HCT116 (cell line): ENCODE measurements at regions of chr5 and their contacts with region 1.

Region 1: DNA sequence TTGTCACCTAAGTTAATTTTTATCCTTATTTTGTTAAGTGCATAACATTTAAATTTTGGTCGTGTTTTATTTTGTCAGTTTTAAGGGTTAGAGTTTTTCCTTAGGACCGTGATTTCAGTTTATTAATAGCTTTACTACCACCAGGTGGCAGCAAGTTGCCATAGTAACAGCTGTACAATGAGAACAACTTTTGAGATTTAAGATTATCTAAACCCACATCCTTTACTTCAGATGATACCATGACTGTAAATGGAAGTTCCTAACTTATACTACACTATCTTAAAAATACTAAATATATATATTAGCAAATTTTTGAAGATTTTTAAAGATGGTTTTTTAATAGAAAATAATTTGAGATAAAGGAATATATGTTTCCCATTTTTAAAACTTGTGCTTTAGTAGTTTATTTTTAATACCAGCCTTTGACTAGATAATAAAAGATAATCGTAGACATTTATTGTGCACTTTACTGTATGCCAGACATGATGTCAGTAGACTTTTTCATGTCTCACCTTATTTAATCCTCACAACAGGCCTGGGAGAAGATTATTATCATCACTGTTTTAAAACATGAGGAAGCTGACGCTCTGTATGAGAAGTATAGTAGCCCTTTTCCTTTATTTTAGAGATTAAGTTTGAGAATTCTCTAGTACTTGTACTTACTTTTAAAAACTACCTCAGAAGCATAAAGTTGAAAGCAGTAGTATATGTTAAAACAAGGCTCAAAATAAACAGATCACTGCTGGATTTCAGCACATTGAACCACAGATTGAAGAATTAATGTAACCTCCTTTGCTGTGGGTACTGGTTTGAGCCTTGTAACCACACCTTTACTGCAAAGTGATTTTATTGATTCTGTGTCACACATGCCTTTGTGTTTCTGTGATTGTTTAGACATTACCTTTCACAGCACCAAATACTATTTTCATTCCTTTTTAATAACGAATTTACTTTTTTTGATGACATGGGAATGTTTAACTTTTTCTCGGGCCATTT is 27.5 kb downstream of the SREK1 start:
- DNase-seq: no peak
- ATAC-seq: peak; percentile 54; the same call in 1 of the 2 replicates
- H3K4me3 ChIP-seq: no peak overlapping the region
- H3K27ac ChIP-seq: no peak overlapping the region
- H3K4me1 ChIP-seq: no peaks in the 10 kb centered on the region
- H3K27me3 ChIP-seq: no peaks in the 10 kb centered on the region
- CTCF ChIP-seq: peak; percentile 35 to 63 (median 44); a peak in 5 of 6 replicates
- POLR2A ChIP-seq: no peak
- RAD21 ChIP-seq: peak; percentile 52

Region 2: GRCh38 chr5:65451436-65451835 is 720.2 kb before region 1 on chr5:
- CTCF ChIA-PET with region 1: no interaction called
- POLR2A ChIA-PET with region 1: no interaction called
- RAD21 ChIA-PET with region 1: no interaction called
- intact Hi-C with region 1: no loop called
- DNase-seq: no peak
- ATAC-seq: no peak
- H3K4me3 ChIP-seq: no peak overlapping the region
- H3K27ac ChIP-seq: no peak overlapping the region
- H3K4me1 ChIP-seq: no peaks in the 10 kb centered on the region
- H3K27me3 ChIP-seq: no peaks in the 10 kb centered on the region
- CTCF ChIP-seq: no peak
- POLR2A ChIP-seq: no peak
- RAD21 ChIP-seq: no peak

Region 3: DNA sequence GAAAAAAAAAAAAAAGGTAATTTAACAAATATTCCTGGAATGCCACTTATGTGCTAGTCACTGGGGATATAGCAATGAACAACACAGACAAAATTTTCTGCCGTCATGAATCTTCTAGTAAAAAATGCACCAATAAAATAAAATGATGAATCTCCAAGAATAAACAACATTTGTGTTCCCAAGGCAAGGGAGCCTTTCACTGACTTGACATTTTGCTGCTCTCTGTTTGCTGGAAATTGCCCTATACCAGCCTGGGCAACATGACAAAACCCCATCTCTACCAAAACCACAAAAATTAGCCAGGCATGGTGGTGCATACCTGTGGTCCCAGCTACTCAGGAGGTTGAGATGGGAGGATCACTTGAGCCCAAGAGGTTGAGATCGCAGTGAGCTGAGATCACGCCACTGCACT is 309.8 kb before region 1 on chr5:
- CTCF ChIA-PET with region 1: no interaction called
- POLR2A ChIA-PET with region 1: no interaction called
- RAD21 ChIA-PET with region 1: no interaction called
- intact Hi-C with region 1: no loop called
- DNase-seq: peak; percentile 61
- ATAC-seq: peak; percentile 97
- H3K4me3 ChIP-seq: peak overlapping the region in 1 of 2 experiments; percentile 33; a peak in 2 of 4 replicates
- H3K27ac ChIP-seq: peak overlapping the region; percentile 65; the same call in 1 of the 2 replicates
- H3K4me1 ChIP-seq: peaks cover 16 to 46% of the 10 kb centered on the region in 2 experiments
- H3K27me3 ChIP-seq: no peaks in the 10 kb centered on the region
- CTCF ChIP-seq: no peak
- POLR2A ChIP-seq: no peak
- RAD21 ChIP-seq: no peak

Region 4: GRCh38 chr5:65994117-65994786 is 177.4 kb before region 1 on chr5:
- CTCF ChIA-PET with region 1: no interaction called
- POLR2A ChIA-PET with region 1: no interaction called
- RAD21 ChIA-PET with region 1: no interaction called
- intact Hi-C with region 1: no loop called
- DNase-seq: no peak
- ATAC-seq: no peak
- H3K4me3 ChIP-seq: no peak overlapping the region
- H3K27ac ChIP-seq: no peak overlapping the region
- H3K4me1 ChIP-seq: no peaks in the 10 kb centered on the region
- H3K27me3 ChIP-seq: no peaks in the 10 kb centered on the region
- CTCF ChIP-seq: no peak
- POLR2A ChIP-seq: no peak
- RAD21 ChIP-seq: no peak

Region 5: GRCh38 chr5:66209350-66209749 is 37.7 kb after region 1 on chr5:
- CTCF ChIA-PET with region 1: interaction called, 3 read pairs
- POLR2A ChIA-PET with region 1: no interaction called
- RAD21 ChIA-PET with region 1: no interaction called
- intact Hi-C with region 1: loop called (anchors 1 kb)
- DNase-seq: peak; percentile 75
- ATAC-seq: peak; percentile 97
- H3K4me3 ChIP-seq: no peak overlapping the region; a peak in 1 of 4 replicates
- H3K27ac ChIP-seq: peak overlapping the region; percentile 52
- H3K4me1 ChIP-seq: peaks cover 17 to 25% of the 10 kb centered on the region in 2 experiments
- H3K27me3 ChIP-seq: no peaks in the 10 kb centered on the region
- CTCF ChIP-seq: peak; percentile 54 to 60 (median 58); a peak in 5 of 6 replicates
- POLR2A ChIP-seq: no peak
- RAD21 ChIP-seq: peak; percentile 87

Region 6: GRCh38 chr5:66223636-66224035 is 52.0 kb after region 1 on chr5:
- CTCF ChIA-PET with region 1: interaction called, 4 read pairs
- POLR2A ChIA-PET with region 1: no interaction called
- RAD21 ChIA-PET with region 1: no interaction called
- intact Hi-C with region 1: loop called (anchors 5 kb)
- DNase-seq: peak; percentile 21
- ATAC-seq: peak; percentile 82
- H3K4me3 ChIP-seq: no peak overlapping the region
- H3K27ac ChIP-seq: no peak overlapping the region
- H3K4me1 ChIP-seq: no peaks in the 10 kb centered on the region
- H3K27me3 ChIP-seq: no peaks in the 10 kb centered on the region
- CTCF ChIP-seq: peak; percentile 39 to 71 (median 66); a peak in 5 of 6 replicates
- POLR2A ChIP-seq: no peak
- RAD21 ChIP-seq: peak; percentile 66

Region 7: DNA sequence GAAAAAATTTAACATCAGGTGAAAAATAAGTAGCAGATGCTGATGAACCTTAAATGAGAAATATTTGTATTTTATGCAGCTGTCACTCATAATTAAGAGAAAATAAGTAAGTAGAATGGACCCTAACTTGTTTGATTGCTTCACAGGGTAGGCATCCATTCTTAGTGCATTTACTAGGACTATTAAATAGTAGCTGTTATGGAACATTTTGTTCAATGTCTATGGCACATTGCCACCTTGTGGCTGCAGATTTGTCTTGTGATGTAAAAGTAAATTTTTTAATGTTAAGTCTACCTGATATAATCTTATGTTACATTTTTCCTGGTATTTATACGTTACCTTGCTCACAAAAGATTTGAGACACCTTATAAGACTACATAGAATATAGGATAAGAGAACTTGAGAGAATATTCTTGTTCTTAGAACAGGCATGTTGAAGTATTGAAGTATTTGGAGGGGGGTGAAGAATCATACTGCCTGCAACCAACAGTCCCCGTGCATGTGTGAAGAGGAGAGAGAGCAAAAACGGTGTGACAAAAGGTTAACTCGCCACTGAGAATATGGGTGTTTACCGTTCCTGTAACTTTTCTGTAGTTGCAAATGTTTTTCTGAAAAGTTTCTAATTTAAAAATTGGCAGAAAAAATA is 585.7 kb after region 1 on chr5:
- CTCF ChIA-PET with region 1: interaction called, 3 read pairs
- POLR2A ChIA-PET with region 1: no interaction called
- RAD21 ChIA-PET with region 1: no interaction called
- intact Hi-C with region 1: loop called (anchors 2 kb)
- DNase-seq: peak; percentile 18
- ATAC-seq: peak; percentile 46; the same call in 1 of the 2 replicates
- H3K4me3 ChIP-seq: no peak overlapping the region
- H3K27ac ChIP-seq: no peak overlapping the region
- H3K4me1 ChIP-seq: no peaks in the 10 kb centered on the region
- H3K27me3 ChIP-seq: peaks cover 35% of the 10 kb centered on the region
- CTCF ChIP-seq: peak; percentile 14 to 58 (median 30); a peak in 3 of 6 replicates
- POLR2A ChIP-seq: no peak
- RAD21 ChIP-seq: peak; percentile 58